ENCODE measurements at regions of chr13 and their contacts with region 1.

Region 1: GRCh38 chr13:51583875-51584730 is at the start of gene WDFY2:
- DNase-seq: peak; percentile 100
- ATAC-seq: peak; percentile 89
- total RNA-seq, gene WDFY2: 4.2 to 4.7 TPM

Region 2: GRCh38 chr13:51803422-51804294 is 219.6 kb after region 1 on chr13 and contains the start of gene DHRS12:
- intact Hi-C with region 1: loop called in 1 of 2 experiments (anchors 10 kb)
- DNase-seq: peak; percentile 93 to 94
- ATAC-seq: peak; percentile 82
- total RNA-seq, gene DHRS12: 15.2 to 15.3 TPM

Measured in left colon (tissue), 2 donors.